Heart left ventricle (tissue), 16 donors: ENCODE measurements at regions of chr2 and their contacts with region 1.

Region 1: GRCh38 chr2:206173147-206173546 is 13.5 kb downstream of the EEF1B2 start:
- DNase-seq: no peak
- ATAC-seq: no peak
- H3K4me3 ChIP-seq: no peak overlapping the region
- H3K27ac ChIP-seq: no peak overlapping the region
- H3K4me1 ChIP-seq: no peaks in the 10 kb centered on the region
- H3K27me3 ChIP-seq: no peaks in the 10 kb centered on the region
- CTCF ChIP-seq: no peak
- POLR2A ChIP-seq: no peak

Region 2: GRCh38 chr2:205934443-205934842 is 238.7 kb before region 1 on chr2:
- intact Hi-C with region 1: no loop called
- DNase-seq: no peak
- ATAC-seq: no peak
- H3K4me3 ChIP-seq: no peak overlapping the region
- H3K27ac ChIP-seq: no peak overlapping the region
- H3K4me1 ChIP-seq: peaks cover 0 to 14% (median 2%) of the 10 kb centered on the region in 12 donors
- H3K27me3 ChIP-seq: peaks cover 0 to 1% (median 0%) of the 10 kb centered on the region in 9 donors
- CTCF ChIP-seq: no peak
- POLR2A ChIP-seq: no peak

Region 3: GRCh38 chr2:205957452-205958154 is 215.5 kb before region 1 on chr2:
- intact Hi-C with region 1: no loop called
- DNase-seq: no peak
- ATAC-seq: no peak
- H3K4me3 ChIP-seq: no peak overlapping the region
- H3K27ac ChIP-seq: no peak overlapping the region
- H3K4me1 ChIP-seq: no peaks in the 10 kb centered on the region
- H3K27me3 ChIP-seq: no peaks in the 10 kb centered on the region
- CTCF ChIP-seq: no peak
- POLR2A ChIP-seq: no peak

Region 4: DNA sequence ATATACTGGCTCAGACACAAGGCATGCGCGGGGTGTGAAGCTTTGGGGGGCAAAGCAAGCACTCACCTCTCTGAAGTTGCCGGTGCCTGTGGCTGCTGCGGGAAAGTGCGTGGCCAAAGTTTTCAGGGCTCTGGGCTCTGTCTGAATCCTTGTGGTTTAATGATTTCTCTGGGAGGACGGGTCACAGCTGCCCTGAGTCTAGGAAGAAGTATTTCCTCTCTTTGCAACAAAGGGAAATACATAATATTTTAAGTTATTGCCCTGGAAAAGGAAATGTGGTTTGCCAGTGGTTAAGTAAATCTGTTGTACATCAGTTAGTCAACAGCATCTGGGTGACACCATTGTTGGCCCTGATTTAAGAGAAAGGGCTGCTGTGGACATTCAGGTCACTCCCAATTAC is 44.6 kb after region 1 on chr2:
- intact Hi-C with region 1: no loop called
- DNase-seq: no peak
- ATAC-seq: peak in 2 of 4 donors; percentile 22 to 53
- H3K4me3 ChIP-seq: peak overlapping the region in 5 of 12 donors; percentile 11 to 30 (median 22)
- H3K27ac ChIP-seq: peak overlapping the region in 1 of 12 donors; percentile 30
- H3K4me1 ChIP-seq: peaks cover 0 to 18% (median 0%) of the 10 kb centered on the region in 12 donors
- H3K27me3 ChIP-seq: peaks cover 0 to 10% (median 0%) of the 10 kb centered on the region in 9 donors
- CTCF ChIP-seq: no peak
- POLR2A ChIP-seq: no peak

Region 5: DNA sequence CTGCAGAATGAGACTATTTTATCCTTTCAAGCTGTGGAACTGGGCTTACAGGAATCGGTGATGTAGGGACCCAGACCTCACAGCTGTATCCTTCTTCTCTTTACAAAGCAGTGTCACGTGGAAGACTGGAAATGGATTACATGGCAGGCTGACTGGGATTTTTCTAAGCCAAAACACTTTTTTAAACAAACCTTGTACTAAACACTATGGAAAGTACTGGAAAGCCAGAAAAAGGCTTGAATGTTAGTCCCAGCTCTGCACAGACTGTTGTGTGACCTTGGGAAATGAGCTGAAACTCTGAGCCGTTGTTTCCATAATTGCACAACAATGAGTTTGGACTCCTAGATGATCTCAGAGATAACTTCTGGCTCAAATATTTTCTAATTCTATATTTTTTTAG is 262.6 kb after region 1 on chr2:
- intact Hi-C with region 1: loop called in 2 of 10 experiments (anchors 5 to 10 kb)
- DNase-seq: no peak
- ATAC-seq: no peak
- H3K4me3 ChIP-seq: no peak overlapping the region
- H3K27ac ChIP-seq: no peak overlapping the region
- H3K4me1 ChIP-seq: no peaks in the 10 kb centered on the region
- H3K27me3 ChIP-seq: peaks cover 0 to 20% (median 5%) of the 10 kb centered on the region in 9 donors
- CTCF ChIP-seq: no peak
- POLR2A ChIP-seq: no peak